T-cell (primary cell): ENCODE measurements at regions of chr3 and their contacts with region 1.

Region 1: GRCh38 chr3:131728898-131729611 is 226.3 kb upstream of the MRPL3 start:
- DNase-seq: no peak
- ATAC-seq: no peak
- H3K4me3 ChIP-seq: no peak overlapping the region
- H3K4me3 Mint-ChIP-seq: no peak overlapping the region
- H3K27ac ChIP-seq: no peak overlapping the region
- H3K27ac Mint-ChIP-seq: no peak overlapping the region
- H3K4me1 ChIP-seq: no peaks in the 10 kb centered on the region
- H3K4me1 Mint-ChIP-seq: no peaks in the 10 kb centered on the region
- H3K27me3 ChIP-seq: no peaks in the 10 kb centered on the region
- H3K27me3 Mint-ChIP-seq: no peaks in the 10 kb centered on the region

Region 2: GRCh38 chr3:131645638-131646037 is 83.4 kb before region 1 on chr3:
- CTCF ChIA-PET with region 1: no interaction called
- POLR2A ChIA-PET with region 1: interaction called in 1 of 2 experiments, 11 read pairs
- DNase-seq: no peak
- ATAC-seq: no peak
- H3K4me3 ChIP-seq: no peak overlapping the region
- H3K4me3 Mint-ChIP-seq: no peak overlapping the region
- H3K27ac ChIP-seq: no peak overlapping the region
- H3K27ac Mint-ChIP-seq: no peak overlapping the region
- H3K4me1 ChIP-seq: no peaks in the 10 kb centered on the region
- H3K4me1 Mint-ChIP-seq: no peaks in the 10 kb centered on the region
- H3K27me3 ChIP-seq: no peaks in the 10 kb centered on the region
- H3K27me3 Mint-ChIP-seq: peaks cover 0 to 3% of the 10 kb centered on the region in 2 donors

Region 3: GRCh38 chr3:131705558-131706051 is 23.4 kb before region 1 on chr3:
- CTCF ChIA-PET with region 1: no interaction called
- POLR2A ChIA-PET with region 1: no interaction called
- DNase-seq: no peak
- ATAC-seq: no peak
- H3K4me3 ChIP-seq: no peak overlapping the region
- H3K4me3 Mint-ChIP-seq: no peak overlapping the region
- H3K27ac ChIP-seq: no peak overlapping the region
- H3K27ac Mint-ChIP-seq: no peak overlapping the region
- H3K4me1 ChIP-seq: no peaks in the 10 kb centered on the region
- H3K4me1 Mint-ChIP-seq: no peaks in the 10 kb centered on the region
- H3K27me3 ChIP-seq: no peaks in the 10 kb centered on the region
- H3K27me3 Mint-ChIP-seq: peaks cover 14 to 24% of the 10 kb centered on the region in 2 donors